Activated CD4-positive, alpha-beta T cell treated with anti-CD3 and anti-CD28 coated beads for 36 hours (primary cell): ENCODE measurements at regions of chr17 and their contacts with region 1.

Region 1: GRCh38 chr17:76278952-76279741 is 14.0 kb downstream of the UBALD2 start:
- DNase-seq: peak; percentile 92
- ATAC-seq: peak; percentile 81
- H3K4me3 Mint-ChIP-seq: no peak overlapping the region
- H3K27ac Mint-ChIP-seq: no peak overlapping the region
- H3K4me1 Mint-ChIP-seq: peaks cover 25% of the 10 kb centered on the region
- H3K27me3 Mint-ChIP-seq: no peaks in the 10 kb centered on the region

Region 2: GRCh38 chr17:75182569-75183450 is 1096.3 kb before region 1 on chr17 and contains the start of gene SUMO2:
- CTCF ChIA-PET with region 1: no interaction called
- POLR2A ChIA-PET with region 1: no interaction called
- intact Hi-C with region 1: no loop called
- DNase-seq: peak; percentile 98
- ATAC-seq: peak; percentile 85
- H3K4me3 Mint-ChIP-seq: peak within 1 kb of the TSS; percentile 97
- H3K27ac Mint-ChIP-seq: peak within 1 kb of the TSS; percentile 96
- H3K4me1 Mint-ChIP-seq: peaks cover 45% of the 10 kb centered on the region
- H3K27me3 Mint-ChIP-seq: no peaks in the 10 kb centered on the region
- total RNA-seq, gene SUMO2: 594 to 727 TPM

Region 3: DNA sequence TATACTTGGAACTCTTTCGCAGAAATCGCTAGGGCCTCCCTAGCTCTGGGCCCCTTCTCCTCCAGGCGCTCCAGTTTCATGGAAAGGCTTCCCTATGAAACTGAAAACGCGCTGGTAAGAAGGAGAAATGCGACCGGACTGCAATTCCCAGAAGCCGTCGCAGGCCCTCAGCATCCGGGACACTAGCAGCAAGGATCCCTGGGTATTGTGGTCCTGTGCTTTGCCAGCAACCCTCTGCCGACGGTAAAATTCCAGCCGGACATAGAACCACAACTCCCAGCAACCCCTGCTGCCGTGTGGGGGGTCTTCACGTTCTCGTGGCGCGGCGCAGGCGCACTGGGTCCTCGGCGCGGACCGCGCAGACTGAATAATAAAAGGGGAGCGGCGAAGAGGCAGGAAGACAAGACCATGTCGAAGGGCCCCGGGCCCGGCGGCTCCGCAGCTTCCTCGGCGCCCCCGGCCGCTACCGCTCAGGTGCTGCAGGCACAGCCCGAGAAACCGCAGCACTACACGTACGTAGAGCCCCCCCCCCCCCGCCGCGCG is 494.6 kb before region 1 on chr17 and contains the start of gene UNK:
- CTCF ChIA-PET with region 1: no interaction called
- POLR2A ChIA-PET with region 1: no interaction called
- intact Hi-C with region 1: no loop called
- DNase-seq: peak; percentile 97
- ATAC-seq: peak; percentile 67
- H3K4me3 Mint-ChIP-seq: peak within 1 kb of the TSS; percentile 91
- H3K27ac Mint-ChIP-seq: peak within 1 kb of the TSS; percentile 100
- H3K4me1 Mint-ChIP-seq: peaks cover 55% of the 10 kb centered on the region
- H3K27me3 Mint-ChIP-seq: peaks cover 1% of the 10 kb centered on the region
- total RNA-seq, gene UNK: 24.5 to 33.7 TPM

Region 4: GRCh38 chr17:75978938-75979704 is 300.0 kb before region 1 on chr17 and contains the starts of genes ACOX1 and TEN1:
- CTCF ChIA-PET with region 1: no interaction called
- POLR2A ChIA-PET with region 1: no interaction called
- intact Hi-C with region 1: no loop called
- DNase-seq: peak; percentile 98
- ATAC-seq: peak; percentile 96
- H3K4me3 Mint-ChIP-seq: peak within 1 kb of the TSS; percentile 89
- H3K27ac Mint-ChIP-seq: peak within 1 kb of the TSS; percentile 94
- H3K4me1 Mint-ChIP-seq: peaks cover 30% of the 10 kb centered on the region
- H3K27me3 Mint-ChIP-seq: no peaks in the 10 kb centered on the region
- total RNA-seq, gene ACOX1: 27.7 to 33.1 TPM
- total RNA-seq, gene TEN1: 9.8 to 13.6 TPM

Region 5: DNA sequence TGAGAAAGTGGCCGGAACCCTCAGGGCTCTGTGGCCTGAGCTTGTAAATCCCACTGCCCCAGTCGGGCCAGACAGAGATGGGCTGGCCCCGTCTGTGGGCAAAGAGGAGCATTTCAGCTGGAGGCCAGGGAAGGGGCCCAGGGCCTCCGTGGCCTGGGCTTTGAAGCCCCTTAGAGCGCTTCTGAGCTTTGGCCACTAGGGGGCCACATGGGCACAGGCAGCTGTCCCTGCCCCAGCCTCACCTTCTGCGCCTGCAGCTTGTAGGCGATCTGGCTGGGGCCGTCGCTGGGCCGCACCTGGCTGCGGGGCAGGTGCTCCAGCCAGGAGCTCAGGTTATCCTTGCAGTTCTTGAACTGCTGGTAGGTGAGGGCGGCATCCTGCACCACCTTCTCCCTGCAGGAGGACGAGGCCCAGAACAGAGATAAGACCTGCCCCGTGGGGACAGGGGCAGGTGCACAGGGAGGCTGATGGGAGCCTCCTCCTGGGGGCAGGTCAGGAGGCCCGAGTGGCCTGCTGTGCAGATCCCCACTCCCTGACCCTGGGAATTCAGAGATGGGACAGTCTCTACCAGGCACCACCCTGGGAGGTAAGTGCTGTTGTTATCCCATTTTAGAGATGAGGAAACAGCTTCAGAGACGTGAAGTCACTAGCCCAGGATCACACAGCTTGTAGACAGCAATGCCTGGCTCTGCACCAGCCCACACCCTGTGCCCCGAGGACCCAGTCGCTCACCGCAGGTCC is 264.8 kb before region 1 on chr17:
- CTCF ChIA-PET with region 1: interaction called, 30 read pairs
- POLR2A ChIA-PET with region 1: interaction called, 3 read pairs
- intact Hi-C with region 1: loop called in 1 of 2 experiments (anchors 1 kb)
- DNase-seq: peak; percentile 90
- ATAC-seq: peak; percentile 99
- H3K4me3 Mint-ChIP-seq: no peak overlapping the region
- H3K27ac Mint-ChIP-seq: no peak overlapping the region
- H3K4me1 Mint-ChIP-seq: peaks cover 3% of the 10 kb centered on the region
- H3K27me3 Mint-ChIP-seq: no peaks in the 10 kb centered on the region

Region 6: DNA sequence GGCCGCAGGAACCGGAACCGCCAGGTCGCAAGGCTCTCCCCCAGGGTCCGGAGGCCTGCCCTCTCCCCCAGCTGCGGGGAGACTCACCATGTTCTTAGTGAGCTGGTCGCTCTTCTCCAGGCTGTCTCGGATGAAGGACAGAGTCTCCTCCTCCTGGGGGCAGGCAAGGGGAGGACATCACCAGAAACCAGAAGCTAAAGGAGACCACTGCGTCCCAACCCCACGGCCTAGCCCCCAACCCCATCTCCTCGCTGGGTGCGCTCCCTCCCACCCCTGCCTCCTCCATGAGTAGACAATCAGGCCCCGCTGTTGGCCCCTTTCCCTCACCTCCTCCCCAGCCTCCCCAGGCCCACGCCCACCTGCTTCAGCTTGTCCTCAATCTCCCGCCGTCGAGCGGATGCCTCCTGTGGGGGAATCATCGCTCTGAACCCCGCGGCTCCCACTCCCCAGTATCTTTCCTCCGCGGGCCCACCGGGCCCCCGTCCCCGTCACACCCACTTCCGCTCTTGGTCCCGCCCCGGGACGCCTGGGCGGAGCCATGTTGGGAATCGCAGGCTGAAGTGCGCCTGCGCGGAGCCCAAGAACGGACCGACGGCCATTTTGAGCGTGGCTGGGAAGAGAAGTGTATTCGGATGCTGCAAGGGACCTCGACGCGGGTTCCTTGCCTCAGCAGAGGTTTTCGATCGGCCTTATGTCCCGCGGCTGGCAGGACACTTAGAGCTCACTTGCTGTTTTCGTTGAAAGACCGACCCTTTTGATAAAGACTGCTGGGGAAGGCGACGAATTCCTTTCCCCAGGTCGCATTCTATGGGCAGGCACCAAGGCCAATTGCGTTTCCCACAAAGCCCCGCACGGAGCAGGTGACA is 175.6 kb before region 1 on chr17 and contains the start of gene EXOC7:
- CTCF ChIA-PET with region 1: interaction called, 9 read pairs
- POLR2A ChIA-PET with region 1: no interaction called
- intact Hi-C with region 1: loop called in 1 of 2 experiments (anchors 1 kb)
- DNase-seq: peak; percentile 96
- ATAC-seq: peak; percentile 94
- H3K4me3 Mint-ChIP-seq: peak within 1 kb of the TSS; percentile 90
- H3K27ac Mint-ChIP-seq: peak within 1 kb of the TSS; percentile 93
- H3K4me1 Mint-ChIP-seq: peaks cover 18% of the 10 kb centered on the region
- H3K27me3 Mint-ChIP-seq: no peaks in the 10 kb centered on the region
- total RNA-seq, gene EXOC7: 73.0 to 77.0 TPM

Region 7: DNA sequence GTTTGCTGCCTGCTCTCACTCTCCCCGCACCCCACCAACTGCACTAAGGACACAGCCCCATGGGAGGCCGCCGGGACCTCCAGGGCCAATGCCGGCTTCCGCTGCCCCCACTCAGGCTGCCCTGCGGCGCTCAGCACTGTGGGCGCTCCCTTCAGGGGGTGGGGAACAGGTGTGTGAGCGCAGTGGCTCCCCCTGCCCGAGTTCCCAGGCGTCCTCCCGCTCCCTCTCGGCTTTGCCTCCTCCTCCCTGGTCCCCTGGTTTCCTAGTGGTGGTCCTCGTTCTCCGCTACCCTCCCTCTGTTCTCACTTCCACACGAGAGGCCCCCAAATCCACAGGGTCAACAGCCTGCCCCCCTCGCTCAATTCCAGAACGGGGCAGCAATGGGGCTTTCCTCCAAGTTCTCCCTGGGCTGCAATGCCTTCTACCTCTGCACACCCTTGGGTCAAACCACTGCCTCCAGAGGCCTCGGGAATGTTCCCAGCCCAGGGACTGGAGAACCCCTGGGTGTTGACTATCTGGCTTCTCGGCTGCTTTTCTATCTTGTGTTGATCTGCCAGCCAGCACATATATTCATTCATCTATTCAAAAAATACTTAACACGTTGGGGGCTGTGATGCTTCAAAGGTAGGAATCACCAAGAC is 148.0 kb before region 1 on chr17:
- CTCF ChIA-PET with region 1: interaction called, 150 read pairs
- POLR2A ChIA-PET with region 1: interaction called, 3 read pairs
- intact Hi-C with region 1: no loop called
- DNase-seq: no peak
- ATAC-seq: no peak
- H3K4me3 Mint-ChIP-seq: no peak overlapping the region
- H3K27ac Mint-ChIP-seq: no peak overlapping the region
- H3K4me1 Mint-ChIP-seq: peaks cover 23% of the 10 kb centered on the region
- H3K27me3 Mint-ChIP-seq: no peaks in the 10 kb centered on the region

Region 8: GRCh38 chr17:76176701-76177574 is 102.2 kb before region 1 on chr17:
- CTCF ChIA-PET with region 1: interaction called, 40 read pairs
- POLR2A ChIA-PET with region 1: interaction called, 5 read pairs
- intact Hi-C with region 1: no loop called
- DNase-seq: no peak
- ATAC-seq: no peak
- H3K4me3 Mint-ChIP-seq: no peak overlapping the region
- H3K27ac Mint-ChIP-seq: no peak overlapping the region
- H3K4me1 Mint-ChIP-seq: peaks cover 43% of the 10 kb centered on the region
- H3K27me3 Mint-ChIP-seq: no peaks in the 10 kb centered on the region

Region 9: DNA sequence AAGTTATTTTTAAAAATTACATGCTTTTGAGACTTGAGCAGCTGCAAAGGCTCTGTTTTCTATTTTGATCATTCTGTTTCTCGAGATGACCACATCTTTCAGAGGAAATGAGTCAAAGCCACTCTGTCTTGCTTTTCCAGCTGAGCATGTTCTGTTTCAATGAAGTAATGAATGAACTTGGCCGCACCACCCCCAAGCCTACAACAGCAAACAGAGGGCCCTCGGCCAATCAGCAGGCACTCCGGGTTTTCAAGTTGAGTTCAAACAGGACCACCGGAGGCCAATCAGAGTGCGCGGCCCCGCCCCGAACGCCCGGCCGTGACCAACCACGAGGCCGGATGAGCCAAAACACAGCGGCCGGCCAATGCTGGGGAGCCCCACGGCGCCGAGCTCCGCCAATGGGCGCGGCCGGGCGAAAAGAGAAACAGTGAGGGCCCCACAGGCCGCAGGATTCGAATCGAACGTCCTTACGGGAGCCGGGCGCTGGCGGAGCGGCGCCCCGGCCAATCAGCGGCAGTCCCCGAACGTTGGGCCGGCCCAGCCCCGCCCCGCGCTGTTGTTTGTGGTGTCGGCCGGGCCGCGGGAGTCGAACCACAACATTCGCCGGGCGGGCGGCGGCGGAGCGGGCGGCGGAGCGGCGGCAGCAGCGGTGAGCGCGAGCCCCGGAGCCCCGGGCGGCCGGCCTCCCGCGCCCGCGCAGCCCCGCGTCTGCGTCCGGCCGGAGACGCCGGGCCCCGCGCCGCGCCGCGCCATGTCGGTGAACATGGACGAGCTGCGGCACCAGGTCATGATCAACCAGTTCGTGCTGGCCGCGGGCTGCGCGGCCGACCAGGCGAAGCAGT is 14.2 kb before region 1 on chr17 and contains the start of gene UBALD2:
- CTCF ChIA-PET with region 1: interaction called, 21 read pairs
- POLR2A ChIA-PET with region 1: interaction called, 5 read pairs
- intact Hi-C with region 1: no loop called
- DNase-seq: peak; percentile 99
- ATAC-seq: peak; percentile 81
- H3K4me3 Mint-ChIP-seq: peak within 1 kb of the TSS; percentile 96
- H3K27ac Mint-ChIP-seq: peak within 1 kb of the TSS; percentile 100
- H3K4me1 Mint-ChIP-seq: peaks cover 52% of the 10 kb centered on the region
- H3K27me3 Mint-ChIP-seq: no peaks in the 10 kb centered on the region
- total RNA-seq, gene UBALD2: 299 to 639 TPM

Region 10: GRCh38 chr17:76345377-76345974 is 66.3 kb after region 1 on chr17:
- CTCF ChIA-PET with region 1: no interaction called
- POLR2A ChIA-PET with region 1: no interaction called
- intact Hi-C with region 1: no loop called
- DNase-seq: no peak
- ATAC-seq: no peak
- H3K4me3 Mint-ChIP-seq: no peak overlapping the region
- H3K27ac Mint-ChIP-seq: peak overlapping the region; percentile 1
- H3K4me1 Mint-ChIP-seq: no peaks in the 10 kb centered on the region
- H3K27me3 Mint-ChIP-seq: no peaks in the 10 kb centered on the region